Activated naive CD4-positive, alpha-beta T cell treated with anti-CD3 and anti-CD28 coated beads for 36 hours (primary cell): ENCODE measurements at regions of chr14 and their contacts with region 1.

Region 1: GRCh38 chr14:21071225-21072030 is 1.3 kb downstream of the ARHGEF40 start:
- DNase-seq: peak; percentile 84
- H3K4me3 Mint-ChIP-seq: peak overlapping the region; percentile 65
- H3K27ac Mint-ChIP-seq: no peak overlapping the region
- H3K4me1 Mint-ChIP-seq: peaks cover 29% of the 10 kb centered on the region
- H3K27me3 Mint-ChIP-seq: peaks cover 55% of the 10 kb centered on the region

Region 2: DNA sequence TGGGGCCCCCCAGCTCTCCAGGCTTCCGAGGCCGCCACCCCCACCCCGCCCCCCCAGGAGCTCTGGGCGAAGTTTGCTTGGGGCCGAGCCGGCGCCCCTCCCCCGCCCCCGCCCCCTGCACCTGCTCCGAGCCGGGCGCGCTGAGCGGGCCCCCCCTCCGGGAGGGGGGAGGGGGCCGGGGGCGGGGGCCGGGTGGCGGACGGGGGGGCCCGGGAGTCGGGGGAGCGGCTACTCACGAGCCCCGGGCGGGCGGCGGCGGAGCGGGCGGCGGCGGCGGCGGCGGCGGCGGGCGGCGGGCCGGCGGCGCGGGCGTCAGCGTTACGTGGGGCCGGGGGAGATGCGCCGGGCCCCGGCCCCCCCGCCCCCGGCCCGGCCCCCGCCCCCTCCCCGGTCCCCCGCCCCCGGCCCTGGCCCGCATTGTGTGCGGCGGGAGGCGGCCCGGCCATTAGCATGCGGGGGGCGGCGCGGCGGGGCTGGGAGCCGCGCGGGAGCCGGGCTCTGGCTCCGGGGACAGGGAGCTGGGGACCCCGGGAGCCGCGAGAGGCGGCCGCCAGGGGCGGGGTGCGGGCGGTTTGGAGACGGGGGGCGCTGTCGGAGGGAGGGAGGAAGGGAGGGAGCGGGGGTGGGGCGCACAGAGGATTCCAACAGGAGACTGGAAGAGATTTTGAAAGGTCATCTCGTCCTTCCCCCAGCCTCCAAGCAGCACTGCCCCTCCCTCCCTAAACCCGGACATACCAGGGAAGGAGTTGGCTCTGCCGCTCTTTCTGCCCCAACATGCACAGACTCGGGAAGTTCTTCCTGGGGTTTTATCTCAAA is 26.9 kb after region 1 on chr14 and contains the start of gene ZNF219:
- CTCF ChIA-PET with region 1: interaction called, 76 read pairs
- intact Hi-C with region 1: no loop called
- DNase-seq: peak; percentile 27
- H3K4me3 Mint-ChIP-seq: peak within 1 kb of the TSS; percentile 76
- H3K27ac Mint-ChIP-seq: no peak within 1 kb of the TSS
- H3K4me1 Mint-ChIP-seq: peaks cover 22% of the 10 kb centered on the region
- H3K27me3 Mint-ChIP-seq: no peaks in the 10 kb centered on the region
- total RNA-seq, gene ZNF219: 8.3 to 9.2 TPM

Region 3: DNA sequence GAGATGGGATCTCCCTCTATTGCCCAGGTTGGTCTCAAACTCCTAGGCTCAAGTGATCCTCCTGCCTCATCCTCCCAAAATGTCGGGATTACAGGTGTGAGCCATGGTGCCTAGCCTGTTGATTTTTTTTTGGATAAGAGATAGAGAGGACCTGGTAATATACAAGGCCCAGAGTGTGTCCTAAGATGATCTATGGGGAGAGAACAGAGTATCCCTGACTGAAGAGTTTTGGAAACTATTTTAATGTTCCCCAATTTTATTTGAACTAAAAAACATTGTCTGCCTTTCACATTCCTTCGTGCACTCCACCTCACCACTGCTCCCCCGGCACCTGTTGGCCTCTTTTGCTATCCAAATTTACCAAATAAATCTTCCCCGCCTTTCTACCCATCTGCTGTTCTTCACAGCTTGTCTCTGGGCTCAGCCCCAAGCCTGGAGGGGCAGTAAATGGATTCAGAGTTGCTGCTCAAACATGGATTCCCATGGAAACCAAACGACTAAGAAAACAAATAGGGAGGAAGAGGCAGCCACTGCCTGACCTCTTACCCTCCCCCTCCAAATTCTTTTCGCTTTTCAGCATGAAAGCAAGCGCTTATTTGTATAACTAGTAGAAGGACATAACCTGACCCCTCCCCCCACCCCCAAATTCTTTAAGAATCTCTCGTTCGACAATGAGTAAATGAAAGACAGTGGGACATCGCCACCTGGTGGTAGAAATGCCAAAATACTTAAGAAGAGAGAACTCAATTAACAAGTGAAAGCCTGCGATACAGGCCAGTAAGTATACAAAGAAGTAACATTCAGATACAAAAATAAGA is 485.9 kb after region 1 on chr14:
- CTCF ChIA-PET with region 1: no interaction called
- intact Hi-C with region 1: loop called (anchors 10 kb)
- DNase-seq: peak; percentile 91
- H3K4me3 Mint-ChIP-seq: peak overlapping the region; percentile 27
- H3K27ac Mint-ChIP-seq: no peak overlapping the region
- H3K4me1 Mint-ChIP-seq: peaks cover 6% of the 10 kb centered on the region
- H3K27me3 Mint-ChIP-seq: no peaks in the 10 kb centered on the region